ENCODE measurements at regions of chr18 and their contacts with region 1.

Region 1: GRCh38 chr18:35756506-35757117 is 175.1 kb downstream of the GALNT1 start:
- DNase-seq: no peak
- H3K4me3 ChIP-seq: no peak overlapping the region
- H3K27ac ChIP-seq: no peak overlapping the region
- H3K4me1 ChIP-seq: peaks cover 0 to 10% (median 0%) of the 10 kb centered on the region in 3 donors
- H3K27me3 ChIP-seq: no peaks in the 10 kb centered on the region
- CTCF ChIP-seq: peak; percentile 59 to 83 (median 75)
- POLR2A ChIP-seq: no peak

Region 2: GRCh38 chr18:35949903-35950627 is 193.5 kb after region 1 on chr18:
- intact Hi-C with region 1: loop called (anchors 5 kb)
- DNase-seq: no peak
- H3K4me3 ChIP-seq: peak overlapping the region; percentile 43 to 81 (median 56)
- H3K27ac ChIP-seq: peak overlapping the region in 1 of 4 donors; percentile 60
- H3K4me1 ChIP-seq: peaks cover 0 to 10% (median 3%) of the 10 kb centered on the region in 3 donors
- H3K27me3 ChIP-seq: peaks cover 0 to 13% (median 0%) of the 10 kb centered on the region in 4 donors
- CTCF ChIP-seq: peak; percentile 89 to 98 (median 92)
- POLR2A ChIP-seq: no peak